ENCODE measurements at regions of chr1 and their contacts with region 1.

Region 1: GRCh38 chr1:975896-976683 is 5.8 kb downstream of the PERM1 start:
- DNase-seq: peak in 2 of 10 donors; percentile 40 to 77
- H3K4me3 ChIP-seq: peak overlapping the region in 44 of 59 donors; percentile 0 to 53 (median 30)
- H3K27ac ChIP-seq: no peak overlapping the region
- H3K27me3 ChIP-seq: peaks cover 0 to 63% (median 44%) of the 10 kb centered on the region in 45 donors
- CTCF ChIP-seq: peak in 44 of 56 donors; percentile 9 to 70 (median 38)

Region 2: GRCh38 chr1:952603-953002 is 23.5 kb before region 1 on chr1:
- intact Hi-C with region 1: loop called in 1 of 2 experiments (anchors 1 kb)
- DNase-seq: no peak
- H3K4me3 ChIP-seq: no peak overlapping the region
- H3K27ac ChIP-seq: no peak overlapping the region
- H3K27me3 ChIP-seq: no peaks in the 10 kb centered on the region
- CTCF ChIP-seq: no peak